K562 (cell line): ENCODE measurements at regions of chr19 and their contacts with region 1.

Region 1: GRCh38 chr19:54364775-54365257 is at the start of gene LAIR1:
- DNase-seq: no peak
- ATAC-seq: no peak
- H3K4me3 ChIP-seq: no peak within 1 kb of the TSS
- H3K27ac ChIP-seq: no peak within 1 kb of the TSS
- H3K4me1 ChIP-seq: peaks cover 0 to 3% of the 10 kb centered on the region in 2 experiments; a peak in 1 of 5 replicates
- H3K27me3 ChIP-seq: peaks cover 3 to 36% of the 10 kb centered on the region in 2 experiments; a peak in 4 of 5 replicates
- CTCF ChIP-seq: no peak
- EP300 ChIP-seq: no peak
- POLR2A ChIP-seq: no peak
- RAD21 ChIP-seq: no peak
- polyA plus RNA-seq, gene LAIR1: not detected

Region 2: DNA sequence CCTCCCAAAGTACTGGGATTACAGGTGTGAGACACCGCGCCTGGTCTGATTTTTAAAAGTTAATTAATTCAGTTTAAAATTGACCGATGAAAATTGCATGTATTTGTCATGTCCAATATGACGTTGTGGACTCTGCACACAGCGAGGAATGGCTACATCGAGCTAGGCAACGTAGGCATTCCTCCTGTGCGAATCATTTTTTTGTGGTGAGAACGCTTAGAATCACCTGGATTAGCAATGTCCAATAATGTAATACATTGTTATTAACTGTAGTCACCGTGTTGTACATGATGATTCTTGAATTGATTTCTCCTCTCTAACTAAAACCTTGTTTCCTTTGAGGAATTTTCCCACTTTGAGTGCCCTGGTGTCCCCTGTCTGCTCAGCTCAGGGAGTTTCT is 141.3 kb after region 1 on chr19:
- CTCF ChIA-PET with region 1: no interaction called
- POLR2A ChIA-PET with region 1: no interaction called
- in situ Hi-C with region 1: loop called (anchors 5 kb)
- intact Hi-C with region 1: no loop called
- DNase-seq: no peak
- ATAC-seq: no peak
- H3K4me3 ChIP-seq: no peak overlapping the region
- H3K27ac ChIP-seq: no peak overlapping the region
- H3K4me1 ChIP-seq: no peaks in the 10 kb centered on the region
- H3K27me3 ChIP-seq: peaks cover 12 to 33% of the 10 kb centered on the region in 2 experiments
- CTCF ChIP-seq: no peak
- EP300 ChIP-seq: no peak
- POLR2A ChIP-seq: no peak
- RAD21 ChIP-seq: no peak